ENCODE measurements at regions of chr17 and their contacts with region 1.

Region 1: GRCh38 chr17:68398691-68399637 is 58.3 kb downstream of the WIPI1 start:
- DNase-seq: peak; percentile 89
- ATAC-seq: peak; percentile 98
- H3K4me3 ChIP-seq: no peak overlapping the region
- H3K27ac ChIP-seq: peak overlapping the region; percentile 6; the same call in 1 of the 2 replicates
- H3K4me1 ChIP-seq: peaks cover 5% of the 10 kb centered on the region; the same call in 1 of the 2 replicates
- H3K27me3 ChIP-seq: no peaks in the 10 kb centered on the region
- CTCF ChIP-seq: peak; percentile 99

Region 2: GRCh38 chr17:68247445-68248198 is 151.3 kb before region 1 on chr17 and contains the start of gene AMZ2:
- CTCF ChIA-PET with region 1: no interaction called
- POLR2A ChIA-PET with region 1: no interaction called
- intact Hi-C with region 1: no loop called
- DNase-seq: peak; percentile 97
- ATAC-seq: peak; percentile 98
- H3K4me3 ChIP-seq: peak within 1 kb of the TSS; percentile 89
- H3K27ac ChIP-seq: peak within 1 kb of the TSS; percentile 49
- H3K4me1 ChIP-seq: peaks cover 11% of the 10 kb centered on the region
- H3K27me3 ChIP-seq: no peaks in the 10 kb centered on the region
- CTCF ChIP-seq: no peak
- total RNA-seq, gene AMZ2: 81.1 and 88.5 TPM in 2 replicates

Region 3: GRCh38 chr17:68260051-68260762 is 138.8 kb before region 1 on chr17:
- CTCF ChIA-PET with region 1: interaction called, 10 read pairs
- POLR2A ChIA-PET with region 1: interaction called, 8 read pairs
- intact Hi-C with region 1: loop called (anchors 1 kb)
- DNase-seq: no peak
- ATAC-seq: no peak
- H3K4me3 ChIP-seq: no peak overlapping the region
- H3K27ac ChIP-seq: no peak overlapping the region
- H3K4me1 ChIP-seq: no peaks in the 10 kb centered on the region
- H3K27me3 ChIP-seq: no peaks in the 10 kb centered on the region
- CTCF ChIP-seq: no peak

Region 4: DNA sequence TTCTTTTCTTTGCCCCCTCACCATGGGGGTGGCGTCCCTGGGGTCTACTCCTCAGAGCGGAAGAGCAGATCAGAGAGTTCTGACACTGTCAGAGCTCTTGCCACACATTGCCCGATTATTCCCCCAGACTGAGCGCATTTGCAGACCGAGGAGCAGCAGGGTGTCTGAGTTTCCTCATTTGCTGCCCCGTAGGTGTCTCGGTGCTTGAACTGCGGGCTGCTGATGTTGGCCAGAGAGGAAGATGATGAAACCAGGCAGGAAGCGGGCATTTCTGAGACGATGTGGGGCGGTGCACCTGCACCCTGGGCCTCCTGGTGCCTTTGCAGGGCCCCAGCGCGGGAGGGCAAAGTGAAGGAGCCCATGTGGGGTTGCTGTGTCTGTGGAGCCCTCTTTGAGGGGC is 52.5 kb before region 1 on chr17:
- CTCF ChIA-PET with region 1: no interaction called
- POLR2A ChIA-PET with region 1: no interaction called
- intact Hi-C with region 1: no loop called
- DNase-seq: no peak
- ATAC-seq: no peak
- H3K4me3 ChIP-seq: no peak overlapping the region
- H3K27ac ChIP-seq: no peak overlapping the region
- H3K4me1 ChIP-seq: no peaks in the 10 kb centered on the region
- H3K27me3 ChIP-seq: no peaks in the 10 kb centered on the region
- CTCF ChIP-seq: no peak

Region 5: DNA sequence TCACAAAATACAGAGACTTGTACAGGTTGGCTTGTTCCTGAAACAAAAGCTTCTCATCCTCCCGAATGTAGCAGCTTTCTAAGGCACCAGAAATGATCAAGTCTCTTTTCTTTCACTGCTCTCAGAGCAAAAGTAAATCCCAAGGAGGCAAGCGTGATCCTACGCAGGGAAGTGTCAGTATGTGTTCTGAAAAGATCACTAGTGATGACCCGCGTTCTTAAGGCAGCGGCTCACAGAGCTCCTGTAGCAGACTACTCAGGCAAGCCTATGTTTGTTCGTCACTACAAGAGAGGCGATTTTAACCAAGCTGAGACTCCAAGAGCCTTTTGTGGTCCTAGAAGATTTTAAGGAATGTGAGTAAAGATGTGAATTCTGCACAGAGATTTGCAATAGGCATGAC is 23.9 kb after region 1 on chr17:
- CTCF ChIA-PET with region 1: no interaction called
- POLR2A ChIA-PET with region 1: no interaction called
- intact Hi-C with region 1: no loop called
- DNase-seq: no peak
- ATAC-seq: no peak
- H3K4me3 ChIP-seq: no peak overlapping the region
- H3K27ac ChIP-seq: no peak overlapping the region
- H3K4me1 ChIP-seq: no peaks in the 10 kb centered on the region
- H3K27me3 ChIP-seq: no peaks in the 10 kb centered on the region
- CTCF ChIP-seq: no peak

Measured in PC-3 (cell line).